ENCODE measurements at regions of chr20 and their contacts with region 1.

Region 1: GRCh38 chr20:52312132-52312729 is 120.7 kb upstream of the ZFP64 start:
- DNase-seq: peak; percentile 20
- H3K4me3 Mint-ChIP-seq: no peak overlapping the region
- H3K27ac Mint-ChIP-seq: no peak overlapping the region
- H3K4me1 Mint-ChIP-seq: no peaks in the 10 kb centered on the region
- H3K27me3 Mint-ChIP-seq: no peaks in the 10 kb centered on the region

Region 2: GRCh38 chr20:52379723-52380336 is 67.6 kb after region 1 on chr20:
- intact Hi-C with region 1: loop called (anchors 1 kb)
- DNase-seq: no peak
- H3K4me3 Mint-ChIP-seq: no peak overlapping the region
- H3K27ac Mint-ChIP-seq: no peak overlapping the region
- H3K4me1 Mint-ChIP-seq: no peaks in the 10 kb centered on the region
- H3K27me3 Mint-ChIP-seq: peaks cover 2% of the 10 kb centered on the region

Region 3: DNA sequence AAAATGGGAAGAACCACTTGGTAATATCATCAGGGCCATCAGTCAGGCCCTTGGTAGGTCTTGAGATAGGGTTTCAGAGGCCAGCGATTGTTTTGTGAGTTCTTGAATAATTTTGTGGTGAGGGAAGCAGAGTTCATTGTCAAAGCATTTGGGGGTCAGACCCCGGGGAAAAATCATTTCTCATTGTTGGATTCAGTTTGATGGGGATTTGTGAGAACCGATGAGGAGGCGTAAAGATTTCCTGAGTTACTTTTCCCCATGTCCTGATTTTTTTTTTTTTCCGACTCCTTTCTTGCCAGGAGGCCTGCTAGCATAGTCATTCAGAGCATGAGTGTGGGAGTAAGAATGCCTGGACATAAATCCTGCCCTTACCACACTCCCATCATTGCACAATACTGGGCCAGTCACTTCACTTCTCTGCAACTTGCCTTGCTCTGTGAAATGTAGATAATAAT is 720.3 kb after region 1 on chr20:
- intact Hi-C with region 1: loop called (anchors 2 kb)
- DNase-seq: no peak
- H3K4me3 Mint-ChIP-seq: no peak overlapping the region
- H3K27ac Mint-ChIP-seq: no peak overlapping the region
- H3K4me1 Mint-ChIP-seq: peaks cover 63% of the 10 kb centered on the region
- H3K27me3 Mint-ChIP-seq: no peaks in the 10 kb centered on the region

Region 4: GRCh38 chr20:53547664-53548239 is 1235.5 kb after region 1 on chr20:
- intact Hi-C with region 1: loop called (anchors 1 kb)
- DNase-seq: peak; percentile 24
- H3K4me3 Mint-ChIP-seq: no peak overlapping the region
- H3K27ac Mint-ChIP-seq: no peak overlapping the region
- H3K4me1 Mint-ChIP-seq: no peaks in the 10 kb centered on the region
- H3K27me3 Mint-ChIP-seq: no peaks in the 10 kb centered on the region

Measured in activated T-helper 1 cell treated with anti-CD3 and anti-CD28 coated beads, Interleukin-12 subunit alpha, Interleukin-12 subunit beta, Interleukin-2, Interleukin-4 antibody, amounts not matched to agents 30 ng/mL and 10 ng/mL and 1 ng/mL, durations not matched to agents 14 hours and 24 hours and 36 hours (primary cell).